Dendritic cell treated with granulocyte-macrophage colony-stimulating factor and Interleukin-4, amounts not matched to agents 40 ng/mL and 50 ng/mL, for 4 days (primary cell): ENCODE measurements at regions of chr14 and their contacts with region 1.

Region 1: DNA sequence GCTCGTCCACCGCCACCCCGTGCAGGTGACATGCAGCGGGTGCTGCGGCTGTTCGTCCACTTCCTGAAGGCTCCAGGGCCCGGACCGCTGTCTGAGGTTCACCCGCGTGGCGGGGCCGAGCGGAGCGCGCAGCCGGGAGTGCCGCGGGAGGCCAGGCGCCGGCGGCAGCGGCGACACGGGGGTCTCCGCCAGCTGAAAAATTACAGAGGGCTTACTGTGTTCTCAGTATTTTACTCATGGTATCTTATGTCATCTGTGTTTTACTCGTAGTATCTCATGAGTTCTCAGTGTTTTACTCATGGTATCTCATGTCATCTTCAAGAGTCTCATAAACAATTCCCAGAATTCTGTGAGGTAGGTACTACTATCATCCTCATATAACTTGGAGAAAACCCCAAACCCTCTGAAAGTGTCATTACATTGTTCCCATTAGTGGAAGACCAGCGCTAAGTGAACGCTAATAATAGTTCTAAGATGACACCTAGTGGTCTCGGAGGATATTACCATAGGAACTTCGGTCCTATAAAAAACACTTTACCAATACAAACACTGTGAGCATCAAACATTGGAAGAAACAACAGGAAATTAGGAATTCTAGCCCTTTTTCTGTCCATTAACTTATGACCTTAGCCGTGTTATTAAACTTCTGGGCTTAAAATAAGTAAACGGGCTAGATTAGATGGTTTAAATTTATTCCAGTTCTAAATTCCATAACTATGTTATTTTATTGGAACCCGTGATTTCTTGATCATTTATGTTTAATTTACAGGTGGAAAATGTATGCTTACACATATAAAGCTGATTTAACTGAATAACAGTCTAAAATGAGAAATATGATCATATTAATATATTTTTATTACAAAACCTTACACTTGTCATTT is 32.4 kb downstream of the AK7 start:
- H3K4me3 Mint-ChIP-seq: peak overlapping the region; percentile 63
- H3K27ac Mint-ChIP-seq: no peak overlapping the region
- H3K4me1 Mint-ChIP-seq: peaks cover 17% of the 10 kb centered on the region
- H3K27me3 Mint-ChIP-seq: peaks cover 5% of the 10 kb centered on the region

Region 2: GRCh38 chr14:96297000-96297399 is 127.3 kb before region 1 on chr14:
- intact Hi-C with region 1: loop called (anchors 1 kb)
- H3K4me3 Mint-ChIP-seq: no peak overlapping the region
- H3K27ac Mint-ChIP-seq: no peak overlapping the region
- H3K4me1 Mint-ChIP-seq: no peaks in the 10 kb centered on the region
- H3K27me3 Mint-ChIP-seq: no peaks in the 10 kb centered on the region

Region 3: DNA sequence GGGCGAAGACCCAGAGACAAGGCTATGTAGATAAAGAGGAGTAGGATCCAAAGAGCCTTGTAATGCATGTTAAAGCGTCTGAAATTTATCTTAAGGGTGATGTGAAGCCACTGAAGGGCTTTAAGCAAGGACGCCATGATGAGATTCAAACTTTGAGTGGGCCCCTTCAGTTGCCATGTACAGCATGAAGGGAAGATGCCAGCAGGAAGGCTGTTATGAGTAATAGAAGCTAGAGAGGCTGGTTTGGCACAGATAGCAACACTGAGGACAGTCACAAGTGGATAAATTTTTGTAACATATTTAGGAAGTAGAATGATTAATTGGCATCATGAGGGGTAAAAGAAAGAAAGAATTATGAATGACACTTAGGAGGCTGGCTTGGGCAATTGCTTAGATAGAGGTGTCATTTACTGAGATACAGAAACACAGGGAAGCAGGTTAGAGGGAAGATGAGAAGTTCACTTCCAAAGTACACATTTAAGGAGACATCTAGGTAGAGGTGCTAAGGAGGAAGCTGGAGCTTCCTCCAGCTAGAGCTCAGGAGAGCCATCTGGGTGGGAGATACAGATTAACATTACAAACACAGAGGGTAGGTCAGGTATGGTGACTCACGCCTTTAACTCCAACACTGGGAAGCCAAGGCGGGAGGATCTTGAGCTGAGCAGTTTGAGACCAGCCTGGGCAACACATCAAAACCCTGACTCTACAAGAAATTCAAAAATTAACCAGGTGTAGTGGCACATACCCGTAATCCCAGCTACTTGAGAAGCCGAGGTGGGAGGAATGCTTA is 74.9 kb before region 1 on chr14:
- intact Hi-C with region 1: no loop called
- H3K4me3 Mint-ChIP-seq: no peak overlapping the region
- H3K27ac Mint-ChIP-seq: no peak overlapping the region
- H3K4me1 Mint-ChIP-seq: peaks cover 9% of the 10 kb centered on the region
- H3K27me3 Mint-ChIP-seq: no peaks in the 10 kb centered on the region

Region 4: GRCh38 chr14:96380735-96381134 is 43.6 kb before region 1 on chr14:
- intact Hi-C with region 1: no loop called
- H3K4me3 Mint-ChIP-seq: no peak overlapping the region
- H3K27ac Mint-ChIP-seq: no peak overlapping the region
- H3K4me1 Mint-ChIP-seq: no peaks in the 10 kb centered on the region
- H3K27me3 Mint-ChIP-seq: no peaks in the 10 kb centered on the region

Region 5: DNA sequence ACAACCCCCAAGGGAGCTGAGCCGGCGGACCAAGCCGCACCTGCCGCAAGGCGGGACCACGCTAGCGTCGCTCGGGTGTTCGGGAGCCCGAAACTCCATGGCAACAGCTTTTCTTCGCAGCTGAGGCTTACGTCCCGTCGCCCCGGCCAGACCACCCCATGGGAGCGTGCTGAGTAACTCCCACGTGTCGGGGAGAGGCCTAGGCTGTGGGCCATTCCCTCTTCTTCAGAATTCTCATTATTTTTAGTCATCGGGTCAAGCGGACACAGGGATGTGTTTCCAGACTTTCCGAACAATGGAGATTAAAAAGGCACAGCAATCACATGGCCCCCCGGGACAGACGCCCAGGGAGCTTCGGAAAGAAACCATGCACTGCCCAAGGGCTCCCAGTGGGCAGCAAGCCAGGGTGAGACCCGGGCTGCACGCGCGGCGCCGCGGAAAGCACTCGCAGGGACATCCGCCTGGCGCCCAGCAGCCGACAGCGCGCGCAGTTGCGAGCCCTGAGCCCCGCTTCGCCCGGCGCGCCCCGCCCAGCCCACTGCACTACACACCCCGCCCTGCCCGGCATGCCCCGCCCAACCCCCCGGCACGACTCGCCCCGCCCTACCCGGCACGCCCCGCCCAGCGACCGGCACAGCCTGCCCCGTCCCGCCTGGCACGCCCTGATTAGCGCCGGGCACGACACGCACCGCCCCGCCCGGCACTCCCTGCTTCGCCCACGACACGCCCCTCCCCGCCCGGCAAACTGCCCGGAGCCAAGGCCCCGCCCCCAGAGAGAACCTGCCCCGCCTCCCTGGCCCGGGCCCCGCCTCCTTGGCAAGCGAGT is 32.8 kb before region 1 on chr14:
- intact Hi-C with region 1: no loop called
- H3K4me3 Mint-ChIP-seq: peak overlapping the region; percentile 84
- H3K27ac Mint-ChIP-seq: peak overlapping the region; percentile 80
- H3K4me1 Mint-ChIP-seq: peaks cover 7% of the 10 kb centered on the region
- H3K27me3 Mint-ChIP-seq: peaks cover 45% of the 10 kb centered on the region

Region 6: DNA sequence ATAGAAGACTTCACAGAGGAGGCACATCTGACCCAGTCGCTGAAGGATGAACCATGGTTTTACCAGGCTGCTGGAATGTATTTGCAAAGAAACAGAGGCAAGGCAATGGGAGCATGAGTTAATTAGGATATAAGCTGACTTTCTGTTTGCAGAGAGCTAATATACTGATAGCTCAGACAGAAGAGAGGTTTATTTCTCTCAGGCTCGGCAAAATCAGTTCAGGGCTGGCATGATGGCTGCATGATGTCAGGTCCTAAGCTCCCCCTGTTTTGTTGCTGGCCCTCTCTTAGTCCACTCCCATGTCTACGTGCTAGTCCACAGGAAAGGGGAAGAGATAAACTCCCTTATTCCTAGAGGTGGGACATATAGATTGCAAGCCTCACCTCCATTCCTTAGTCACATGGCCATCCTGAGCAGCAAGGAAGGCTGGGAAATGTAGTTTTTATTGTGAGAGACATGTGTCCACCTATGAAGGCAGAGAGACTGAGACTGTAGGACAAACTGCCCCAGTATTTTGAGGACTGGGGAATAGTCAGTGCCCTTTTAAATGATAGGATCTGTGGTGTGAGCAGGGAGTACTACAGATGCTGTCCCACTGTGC is 597.3 kb after region 1 on chr14:
- intact Hi-C with region 1: no loop called
- H3K4me3 Mint-ChIP-seq: no peak overlapping the region
- H3K27ac Mint-ChIP-seq: no peak overlapping the region
- H3K4me1 Mint-ChIP-seq: peaks cover 8% of the 10 kb centered on the region
- H3K27me3 Mint-ChIP-seq: peaks cover 51% of the 10 kb centered on the region